Activated naive CD4-positive, alpha-beta T cell treated with anti-CD3 and anti-CD28 coated beads for 36 hours (primary cell): ENCODE measurements at regions of chr3 and their contacts with region 1.

Region 1: DNA sequence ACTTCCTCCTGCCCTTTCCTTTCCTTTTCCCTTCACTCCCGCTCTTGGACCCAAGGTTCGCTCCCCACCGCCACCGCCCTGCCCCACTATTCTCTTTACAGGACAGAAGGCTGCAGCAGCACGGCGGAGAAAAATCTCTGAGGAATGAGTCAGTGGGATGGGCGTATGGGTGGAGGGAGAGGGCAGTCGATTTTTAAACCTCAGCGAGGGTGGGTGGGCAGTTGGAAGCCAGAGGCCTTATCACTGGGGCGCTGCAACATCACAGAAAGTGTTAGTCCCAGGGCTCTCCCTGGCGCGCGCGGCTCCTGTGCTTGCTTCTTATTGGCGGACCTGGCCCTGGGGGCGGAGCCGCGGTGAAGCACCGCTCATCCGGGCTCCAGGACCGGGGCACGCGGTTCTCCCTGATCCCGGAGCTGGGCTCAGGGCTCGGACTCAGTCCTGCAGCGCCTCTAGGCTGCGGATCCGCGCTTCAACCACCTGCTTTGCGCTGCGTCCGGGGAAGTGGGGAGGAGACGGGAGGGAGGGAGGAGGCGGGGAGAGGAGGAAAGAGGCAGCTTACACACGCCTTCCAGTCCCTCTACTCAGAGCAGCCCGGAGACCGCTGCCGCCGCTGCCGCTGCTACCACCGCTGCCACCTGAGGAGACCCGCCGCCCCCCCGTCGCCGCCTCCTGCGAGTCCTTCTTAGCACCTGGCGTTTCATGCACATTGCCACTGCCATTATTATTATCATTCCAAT is at the start of gene ALCAM:
- DNase-seq: peak; percentile 90
- H3K4me3 Mint-ChIP-seq: peak within 1 kb of the TSS; percentile 93
- H3K27ac Mint-ChIP-seq: peak within 1 kb of the TSS; percentile 97
- H3K4me1 Mint-ChIP-seq: peaks cover 32% of the 10 kb centered on the region
- H3K27me3 Mint-ChIP-seq: peaks cover 16% of the 10 kb centered on the region
- total RNA-seq, gene ALCAM: 17.5 to 18.7 TPM

Region 2: DNA sequence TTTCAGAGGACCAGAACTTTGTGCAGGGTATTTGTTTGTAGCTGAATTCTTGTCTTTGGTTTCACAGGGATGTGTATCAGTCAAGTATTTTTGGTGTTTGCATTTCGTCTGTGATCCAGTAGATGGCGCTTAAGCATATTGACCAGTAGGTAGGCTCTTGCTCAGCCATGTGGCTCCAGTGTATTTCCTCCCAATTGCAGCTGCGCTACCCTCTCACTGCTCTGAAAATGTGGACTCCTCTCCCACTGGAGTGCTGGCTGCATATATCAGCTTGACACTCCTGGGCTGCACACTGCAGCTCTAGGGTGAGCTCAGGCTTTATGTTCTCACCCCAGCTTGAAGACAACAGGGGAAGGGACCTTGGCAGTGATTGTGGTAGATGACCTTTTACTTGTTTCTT is 1264.1 kb before region 1 on chr3:
- CTCF ChIA-PET with region 1: no interaction called
- intact Hi-C with region 1: loop called (anchors 1 kb)
- DNase-seq: peak; percentile 7
- H3K4me3 Mint-ChIP-seq: no peak overlapping the region
- H3K27ac Mint-ChIP-seq: no peak overlapping the region
- H3K4me1 Mint-ChIP-seq: no peaks in the 10 kb centered on the region
- H3K27me3 Mint-ChIP-seq: no peaks in the 10 kb centered on the region

Region 3: DNA sequence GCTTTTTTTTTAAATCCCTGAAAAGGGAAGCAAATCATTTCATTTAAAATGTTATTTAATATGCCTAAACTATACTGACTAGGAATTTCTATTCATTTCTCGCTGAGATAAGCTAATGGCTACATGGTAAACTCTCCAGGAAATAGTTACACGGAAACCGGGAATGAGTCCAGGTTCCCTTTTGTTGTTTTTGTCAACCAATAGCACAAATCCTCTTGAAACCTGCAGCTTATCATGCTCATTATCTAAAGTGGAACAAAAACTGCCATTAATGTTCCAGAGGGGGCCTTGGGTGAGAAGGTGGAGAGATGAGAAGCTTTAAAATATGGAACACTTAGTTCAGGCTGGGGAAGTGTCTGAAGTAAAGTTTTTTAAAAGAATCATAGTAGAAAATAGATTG is 113.3 kb before region 1 on chr3:
- CTCF ChIA-PET with region 1: no interaction called
- intact Hi-C with region 1: no loop called
- DNase-seq: no peak
- H3K4me3 Mint-ChIP-seq: no peak overlapping the region
- H3K27ac Mint-ChIP-seq: no peak overlapping the region
- H3K4me1 Mint-ChIP-seq: no peaks in the 10 kb centered on the region
- H3K27me3 Mint-ChIP-seq: no peaks in the 10 kb centered on the region

Region 4: DNA sequence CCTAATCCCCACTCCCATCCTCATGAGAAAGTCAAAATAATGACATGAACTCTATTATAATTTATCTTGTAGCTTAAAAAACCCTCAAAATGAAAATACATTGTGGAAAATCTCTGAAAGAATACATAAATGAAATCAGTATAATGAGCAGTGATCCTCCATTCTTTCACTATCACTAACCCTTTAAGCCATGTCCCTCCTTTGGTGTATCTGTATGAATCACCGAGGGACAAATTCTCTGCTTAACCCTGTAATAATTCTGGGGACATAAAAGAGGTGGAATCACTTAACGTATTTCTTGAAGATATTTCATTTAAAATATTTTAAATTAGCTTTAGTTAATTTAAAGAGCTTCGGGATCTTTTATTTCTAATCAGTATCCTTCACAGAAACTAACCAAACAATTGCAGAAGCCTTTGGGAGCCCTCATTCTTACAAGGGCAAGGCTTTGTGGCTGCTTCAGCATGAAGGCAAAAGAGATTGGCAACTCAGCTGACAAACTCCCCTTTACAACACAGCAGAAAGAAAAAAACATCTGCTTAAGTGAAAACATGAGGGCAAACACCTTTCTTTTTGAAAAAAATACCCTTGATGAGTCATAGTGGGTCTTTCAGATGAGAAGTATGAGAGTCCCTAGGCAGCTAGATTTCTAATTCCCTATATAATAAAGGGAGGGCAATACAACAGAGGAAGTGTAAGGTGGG is 43.8 kb before region 1 on chr3:
- CTCF ChIA-PET with region 1: no interaction called
- intact Hi-C with region 1: loop called (anchors 1 kb)
- DNase-seq: no peak
- H3K4me3 Mint-ChIP-seq: no peak overlapping the region
- H3K27ac Mint-ChIP-seq: no peak overlapping the region
- H3K4me1 Mint-ChIP-seq: peaks cover 9% of the 10 kb centered on the region
- H3K27me3 Mint-ChIP-seq: peaks cover 4% of the 10 kb centered on the region

Region 5: GRCh38 chr3:105774444-105775180 is 408.1 kb after region 1 on chr3:
- CTCF ChIA-PET with region 1: no interaction called
- intact Hi-C with region 1: loop called (anchors 1 kb)
- DNase-seq: no peak
- H3K4me3 Mint-ChIP-seq: no peak overlapping the region
- H3K27ac Mint-ChIP-seq: peak overlapping the region; percentile 26
- H3K4me1 Mint-ChIP-seq: peaks cover 74% of the 10 kb centered on the region
- H3K27me3 Mint-ChIP-seq: no peaks in the 10 kb centered on the region

Region 6: GRCh38 chr3:106176734-106177133 is 810.2 kb after region 1 on chr3:
- CTCF ChIA-PET with region 1: no interaction called
- intact Hi-C with region 1: loop called (anchors 1 kb)
- DNase-seq: peak; percentile 79
- H3K4me3 Mint-ChIP-seq: peak overlapping the region; percentile 38
- H3K27ac Mint-ChIP-seq: peak overlapping the region; percentile 93
- H3K4me1 Mint-ChIP-seq: peaks cover 59% of the 10 kb centered on the region
- H3K27me3 Mint-ChIP-seq: no peaks in the 10 kb centered on the region

Region 7: DNA sequence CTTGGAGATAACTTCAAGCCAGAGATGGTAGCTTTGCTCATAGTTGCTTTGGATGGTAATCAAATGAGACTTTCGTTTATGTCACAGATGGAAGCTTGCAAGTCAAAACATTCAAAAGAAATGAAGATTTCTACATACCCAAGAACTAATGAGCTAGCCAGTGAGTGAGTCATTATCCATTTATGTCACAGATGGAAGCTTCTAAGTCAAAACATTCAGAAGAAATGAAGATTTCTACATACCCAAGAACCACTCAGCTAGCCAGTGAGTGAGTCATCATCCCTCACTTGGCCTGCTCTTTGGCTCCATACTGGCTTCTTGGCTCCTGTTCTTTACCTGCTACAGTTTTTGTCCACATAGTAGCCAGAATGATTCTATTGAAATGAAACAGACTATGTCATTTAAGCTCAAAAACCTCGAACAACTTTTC is 1062.1 kb after region 1 on chr3:
- CTCF ChIA-PET with region 1: no interaction called
- intact Hi-C with region 1: loop called (anchors 1 kb)
- DNase-seq: peak; percentile 66
- H3K4me3 Mint-ChIP-seq: no peak overlapping the region
- H3K27ac Mint-ChIP-seq: peak overlapping the region; percentile 81
- H3K4me1 Mint-ChIP-seq: peaks cover 46% of the 10 kb centered on the region
- H3K27me3 Mint-ChIP-seq: no peaks in the 10 kb centered on the region